AG04450 (cell line): ENCODE measurements at regions of chr12 and their contacts with region 1.

Region 1: GRCh38 chr12:25322918-25323532 is 72.3 kb upstream of the KRAS start:
- DNase-seq: no peak
- H3K4me3 ChIP-seq: no peak overlapping the region
- H3K27ac ChIP-seq: no peak overlapping the region
- H3K27me3 ChIP-seq: no peaks in the 10 kb centered on the region
- CTCF ChIP-seq: no peak

Region 2: GRCh38 chr12:24966951-24967564 is 356.0 kb before region 1 on chr12:
- CTCF ChIA-PET with region 1: no interaction called
- POLR2A ChIA-PET with region 1: no interaction called
- DNase-seq: no peak
- H3K4me3 ChIP-seq: no peak overlapping the region
- H3K27ac ChIP-seq: no peak overlapping the region
- H3K27me3 ChIP-seq: no peaks in the 10 kb centered on the region
- CTCF ChIP-seq: no peak

Region 3: GRCh38 chr12:25308756-25309155 is 14.3 kb before region 1 on chr12:
- CTCF ChIA-PET with region 1: no interaction called
- POLR2A ChIA-PET with region 1: no interaction called
- DNase-seq: peak; percentile 29
- H3K4me3 ChIP-seq: no peak overlapping the region
- H3K27ac ChIP-seq: no peak overlapping the region
- H3K27me3 ChIP-seq: no peaks in the 10 kb centered on the region
- CTCF ChIP-seq: no peak

Region 4: GRCh38 chr12:25625146-25625545 is 302.1 kb after region 1 on chr12:
- CTCF ChIA-PET with region 1: interaction called, 10 read pairs
- POLR2A ChIA-PET with region 1: no interaction called
- DNase-seq: no peak
- H3K4me3 ChIP-seq: no peak overlapping the region
- H3K27ac ChIP-seq: no peak overlapping the region
- H3K27me3 ChIP-seq: no peaks in the 10 kb centered on the region
- CTCF ChIP-seq: no peak